ENCODE measurements at regions of chr11 and their contacts with region 1.

Region 1: GRCh38 chr11:120929664-120930154 is 94.2 kb upstream of the TBCEL start:
- DNase-seq: peak; percentile 72
- H3K4me3 ChIP-seq: no peak overlapping the region
- H3K27ac ChIP-seq: no peak overlapping the region
- H3K4me1 ChIP-seq: peaks cover 0 to 16% of the 10 kb centered on the region in 2 experiments; a peak in 2 of 4 replicates
- H3K27me3 ChIP-seq: no peaks in the 10 kb centered on the region
- CTCF ChIP-seq: peak; percentile 59
- EP300 ChIP-seq: no peak
- RAD21 ChIP-seq: peak; percentile 53

Region 2: GRCh38 chr11:120738516-120739046 is 191.1 kb before region 1 on chr11:
- CTCF ChIA-PET with region 1: interaction called, 11 read pairs
- POLR2A ChIA-PET with region 1: no interaction called
- DNase-seq: no peak
- H3K4me3 ChIP-seq: no peak overlapping the region
- H3K27ac ChIP-seq: peak overlapping the region in 1 of 2 experiments; percentile 94; a peak in 2 of 4 replicates
- H3K4me1 ChIP-seq: peaks cover 0 to 44% of the 10 kb centered on the region in 2 experiments; a peak in 2 of 4 replicates
- H3K27me3 ChIP-seq: no peaks in the 10 kb centered on the region
- CTCF ChIP-seq: no peak
- EP300 ChIP-seq: no peak
- RAD21 ChIP-seq: no peak

Region 3: DNA sequence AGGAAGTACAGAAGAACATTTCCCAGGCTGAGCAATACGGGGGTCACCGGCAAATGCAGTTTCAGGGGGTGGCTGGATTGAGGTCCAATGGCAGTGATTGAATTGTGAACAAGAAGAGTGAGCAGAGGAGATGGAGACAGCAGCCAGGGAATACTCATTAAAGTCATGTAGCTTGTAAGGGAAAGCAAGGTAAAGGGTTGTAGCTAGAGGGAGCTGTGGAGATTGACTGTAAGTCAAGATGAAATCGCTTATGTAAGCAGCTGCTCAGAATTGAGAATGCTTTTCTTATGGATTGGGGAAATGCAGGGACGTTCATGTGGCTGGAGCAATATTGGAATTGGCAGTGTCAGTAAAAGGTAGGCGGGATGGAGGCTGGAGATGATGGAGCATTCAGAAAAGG is 17.2 kb before region 1 on chr11:
- CTCF ChIA-PET with region 1: interaction called, 30 read pairs
- POLR2A ChIA-PET with region 1: no interaction called
- DNase-seq: peak; percentile 51
- H3K4me3 ChIP-seq: no peak overlapping the region
- H3K27ac ChIP-seq: no peak overlapping the region
- H3K4me1 ChIP-seq: peaks cover 0 to 3% of the 10 kb centered on the region in 2 experiments; a peak in 1 of 4 replicates
- H3K27me3 ChIP-seq: no peaks in the 10 kb centered on the region
- CTCF ChIP-seq: 0 out of 2 replicates have a peak, but pooled peaks have one; percentile 20
- EP300 ChIP-seq: no peak
- RAD21 ChIP-seq: peak; percentile 43

Region 4: GRCh38 chr11:120917559-120918239 is 12.0 kb before region 1 on chr11:
- CTCF ChIA-PET with region 1: interaction called, 30 read pairs
- POLR2A ChIA-PET with region 1: no interaction called
- DNase-seq: no peak
- H3K4me3 ChIP-seq: no peak overlapping the region
- H3K27ac ChIP-seq: no peak overlapping the region
- H3K4me1 ChIP-seq: peaks cover 0 to 3% of the 10 kb centered on the region in 2 experiments; a peak in 1 of 4 replicates
- H3K27me3 ChIP-seq: no peaks in the 10 kb centered on the region
- CTCF ChIP-seq: no peak
- EP300 ChIP-seq: no peak
- RAD21 ChIP-seq: no peak

Region 5: DNA sequence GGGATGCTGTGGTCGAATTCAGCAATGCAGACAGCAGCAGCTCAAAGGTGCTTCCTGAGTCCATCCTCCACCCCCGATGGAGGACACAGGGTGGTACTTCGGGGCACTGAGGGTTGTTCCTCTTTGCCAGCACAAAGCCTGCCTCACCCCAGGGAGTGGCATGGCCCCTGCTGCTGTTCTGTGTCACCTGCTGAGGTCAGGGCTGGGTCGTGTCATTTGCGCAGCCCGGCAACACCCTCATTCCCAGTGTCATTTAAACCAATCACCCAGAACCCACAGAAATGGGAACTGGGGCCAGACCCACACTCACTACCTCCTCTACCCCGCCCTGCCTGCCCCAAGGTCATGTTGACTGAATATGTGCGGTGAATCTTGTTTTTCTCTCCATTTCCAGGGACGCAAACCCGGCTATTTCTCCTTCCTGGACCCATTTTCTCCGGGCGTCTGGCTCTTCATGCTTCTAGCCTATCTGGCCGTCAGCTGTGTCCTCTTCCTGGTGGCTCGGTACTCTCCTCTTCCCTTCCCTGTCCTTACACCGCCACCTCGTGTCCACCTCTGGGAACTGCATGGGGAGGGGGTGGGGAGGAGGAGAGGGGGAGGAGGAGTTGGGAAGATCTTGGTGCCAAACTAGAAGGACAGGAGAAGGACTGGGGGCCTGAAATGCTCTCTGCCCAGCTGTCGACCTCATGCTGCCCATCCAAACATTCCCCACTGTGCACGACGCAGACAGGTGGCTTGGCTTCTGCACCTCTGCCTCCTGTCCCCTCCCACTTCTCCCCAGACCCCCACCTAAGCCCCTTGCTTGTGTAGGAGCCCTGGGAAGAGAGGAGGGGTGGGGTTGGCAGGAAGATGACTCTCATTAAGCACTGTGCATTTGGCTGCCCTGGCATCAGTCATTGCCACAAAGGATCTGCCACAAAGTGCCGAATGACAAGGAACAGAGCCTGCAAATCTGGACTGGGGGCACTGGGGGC is 23.0 kb after region 1 on chr11:
- CTCF ChIA-PET with region 1: interaction called, 49 read pairs
- POLR2A ChIA-PET with region 1: no interaction called
- DNase-seq: peak; percentile 89
- H3K4me3 ChIP-seq: peak overlapping the region in 1 of 2 experiments; percentile 54; a peak in 1 of 4 replicates
- H3K27ac ChIP-seq: peak overlapping the region in 1 of 2 experiments; percentile 62; a peak in 2 of 4 replicates
- H3K4me1 ChIP-seq: peaks cover 0 to 34% of the 10 kb centered on the region in 2 experiments; a peak in 1 of 4 replicates
- H3K27me3 ChIP-seq: no peaks in the 10 kb centered on the region; the same call in 1 of the 2 replicates
- CTCF ChIP-seq: peak; percentile 73
- EP300 ChIP-seq: no peak
- RAD21 ChIP-seq: peak; percentile 93